ENCODE measurements at regions of chr6 and their contacts with region 1.

Region 1: GRCh38 chr6:27472617-27473400 is at the start of gene ZNF184:
- DNase-seq: peak; percentile 56
- H3K4me3 ChIP-seq: peak within 1 kb of the TSS; percentile 62 to 86 (median 82)
- H3K27ac ChIP-seq: peak within 1 kb of the TSS; percentile 90 to 97 (median 96)
- H3K4me1 ChIP-seq: peaks cover 0 to 51% (median 11%) of the 10 kb centered on the region in 3 donors
- H3K27me3 ChIP-seq: no peaks in the 10 kb centered on the region
- CTCF ChIP-seq: no peak
- POLR2A ChIP-seq: peak in 2 of 4 donors; percentile 64 to 88
- total RNA-seq, gene ZNF184: 3.9 to 4.9 (median 4.3) TPM

Region 2: GRCh38 chr6:27188885-27189418 is 283.9 kb before region 1 on chr6:
- intact Hi-C with region 1: loop called (anchors 10 kb)
- DNase-seq: no peak
- H3K4me3 ChIP-seq: peak overlapping the region; percentile 69 to 87 (median 74)
- H3K27ac ChIP-seq: peak overlapping the region; percentile 83 to 92 (median 88)
- H3K4me1 ChIP-seq: peaks cover 0 to 14% (median 3%) of the 10 kb centered on the region in 3 donors
- H3K27me3 ChIP-seq: peaks cover 0 to under 1% (median 0%) of the 10 kb centered on the region in 4 donors
- CTCF ChIP-seq: peak; percentile 41 to 84 (median 68)
- POLR2A ChIP-seq: no peak

Region 3: DNA sequence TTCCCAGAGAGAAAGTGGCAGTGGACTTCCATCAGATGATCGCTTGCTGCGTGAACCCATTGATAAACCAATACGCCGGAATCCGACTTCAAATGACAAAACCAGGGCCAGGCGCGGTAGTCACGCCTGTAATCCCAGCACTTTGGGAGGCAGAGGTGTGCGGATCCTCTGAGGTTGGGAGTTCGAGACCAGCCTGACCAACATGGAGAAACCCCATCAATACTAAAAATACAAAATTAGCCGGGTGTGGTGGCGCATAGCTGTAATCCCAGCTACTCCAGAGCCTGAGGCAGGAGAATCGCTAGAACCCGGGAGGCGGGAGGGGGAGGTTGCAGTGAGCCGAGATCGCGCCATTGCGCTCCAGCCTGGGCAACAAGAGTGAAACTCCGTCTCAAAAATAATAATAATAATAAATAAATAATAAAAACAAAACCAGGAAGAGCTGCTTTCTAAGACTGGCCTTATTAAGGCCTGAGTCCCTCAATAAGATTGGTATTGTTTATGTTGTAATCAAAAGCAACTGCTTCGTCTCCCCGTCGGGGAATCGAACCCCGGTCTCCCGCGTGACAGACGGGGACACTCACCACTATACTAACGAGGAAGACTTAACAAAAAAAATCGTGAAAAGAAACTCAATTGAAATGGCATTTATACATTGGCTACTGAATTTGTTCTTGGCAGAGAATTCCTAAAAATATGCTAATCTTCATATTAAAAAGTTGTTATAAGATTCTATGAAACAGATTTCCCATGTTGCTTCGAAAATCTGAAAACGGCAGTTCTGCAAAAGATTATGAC is 110.3 kb after region 1 on chr6:
- intact Hi-C with region 1: no loop called
- DNase-seq: no peak
- H3K4me3 ChIP-seq: no peak overlapping the region
- H3K27ac ChIP-seq: no peak overlapping the region
- H3K4me1 ChIP-seq: no peaks in the 10 kb centered on the region
- H3K27me3 ChIP-seq: peaks cover 0 to 83% (median 5%) of the 10 kb centered on the region in 4 donors
- CTCF ChIP-seq: no peak
- POLR2A ChIP-seq: no peak

Measured in esophagus squamous epithelium (tissue), 5 donors.